Activated CD4-positive, alpha-beta memory T cell treated with anti-CD3 and anti-CD28 coated beads for 36 hours (primary cell): ENCODE measurements at regions of chr20 and their contacts with region 1.

Region 1: DNA sequence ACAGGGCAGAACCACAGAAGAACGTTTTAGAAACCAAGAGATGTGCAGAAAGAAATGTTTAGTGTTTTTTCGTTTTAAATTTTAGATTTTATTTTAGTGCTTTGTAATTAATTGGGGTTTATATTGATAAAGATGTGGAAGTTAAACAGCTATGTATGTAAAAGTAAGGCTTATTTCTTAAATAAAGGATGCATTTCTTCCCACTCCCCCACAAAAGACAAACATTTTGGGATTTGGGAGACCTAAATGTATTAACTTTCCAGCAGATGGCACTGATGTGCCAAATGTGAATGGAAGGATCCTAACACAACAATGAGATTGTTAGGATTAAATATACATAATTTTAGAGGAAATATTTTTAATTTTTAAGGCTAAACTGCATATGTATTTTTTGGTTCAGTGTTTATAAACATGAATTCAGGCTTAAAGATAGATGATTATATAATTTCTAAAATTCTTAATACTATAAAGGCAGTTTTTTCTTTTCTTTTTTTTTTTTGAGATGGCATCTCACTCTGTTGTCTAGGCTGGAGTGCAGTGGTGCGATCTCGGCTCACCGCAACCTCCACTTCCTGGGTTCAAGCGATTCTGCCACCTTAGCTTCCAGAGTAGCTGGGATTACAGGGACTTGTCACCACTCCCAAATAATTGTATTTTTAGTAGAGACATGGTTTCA is 12.0 kb downstream of the PFDN4 start:
- DNase-seq: no peak
- H3K4me3 Mint-ChIP-seq: no peak overlapping the region
- H3K27ac Mint-ChIP-seq: no peak overlapping the region
- H3K4me1 Mint-ChIP-seq: peaks cover 24% of the 10 kb centered on the region
- H3K27me3 Mint-ChIP-seq: no peaks in the 10 kb centered on the region

Region 2: DNA sequence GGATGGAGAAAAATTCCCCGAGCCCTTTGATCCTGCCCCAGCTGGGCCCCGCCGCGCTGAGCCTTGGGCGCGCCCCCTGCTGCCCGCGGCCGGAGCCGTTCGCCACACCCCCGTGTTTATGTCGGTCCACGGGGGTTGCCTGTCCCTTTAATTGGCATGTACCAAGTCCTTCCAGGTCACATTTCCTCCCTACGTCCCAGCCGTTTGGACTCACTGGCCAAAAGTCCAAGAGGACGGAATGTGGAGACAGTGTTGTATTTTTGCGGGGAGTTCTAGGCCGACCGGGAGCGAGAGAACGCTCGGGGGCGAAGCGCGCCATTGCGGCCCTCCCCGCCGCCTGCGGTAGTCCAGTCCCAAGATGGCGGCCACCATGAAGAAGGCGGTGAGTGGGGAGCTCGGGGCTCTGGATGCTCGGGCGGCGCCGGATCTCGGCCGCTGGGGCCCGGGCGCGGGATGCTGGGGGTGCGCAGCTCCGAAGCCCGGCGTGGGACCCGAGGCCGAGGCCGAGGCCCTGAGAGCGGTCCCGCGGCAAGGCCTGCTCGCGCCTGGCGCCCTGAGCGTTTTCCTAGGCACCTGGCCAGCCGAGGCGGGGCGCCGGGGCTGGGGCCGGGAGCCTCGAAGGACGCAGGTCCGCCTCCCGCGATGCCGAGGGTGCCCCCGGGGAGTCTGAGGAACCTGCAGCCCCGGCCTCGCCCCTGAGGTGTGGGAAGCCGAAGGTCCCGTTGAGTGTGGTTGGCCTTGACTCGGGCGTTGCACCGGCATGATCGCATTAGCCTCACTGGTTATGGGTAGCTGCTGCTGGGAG is 11.9 kb before region 1 on chr20 and contains the start of gene PFDN4:
- CTCF ChIA-PET with region 1: interaction called, 18 read pairs
- POLR2A ChIA-PET with region 1: interaction called, 3 read pairs
- intact Hi-C with region 1: no loop called
- DNase-seq: peak; percentile 88
- H3K4me3 Mint-ChIP-seq: peak within 1 kb of the TSS; percentile 95
- H3K27ac Mint-ChIP-seq: peak within 1 kb of the TSS; percentile 99
- H3K4me1 Mint-ChIP-seq: peaks cover 50% of the 10 kb centered on the region
- H3K27me3 Mint-ChIP-seq: peaks cover 2% of the 10 kb centered on the region
- total RNA-seq, gene PFDN4: 38.4 to 40.3 TPM

Region 3: GRCh38 chr20:54284934-54285704 is 65.2 kb after region 1 on chr20:
- CTCF ChIA-PET with region 1: no interaction called
- POLR2A ChIA-PET with region 1: no interaction called
- intact Hi-C with region 1: loop called (anchors 1 kb)
- DNase-seq: peak; percentile 56
- H3K4me3 Mint-ChIP-seq: peak overlapping the region; percentile 58
- H3K27ac Mint-ChIP-seq: peak overlapping the region; percentile 92
- H3K4me1 Mint-ChIP-seq: peaks cover 17% of the 10 kb centered on the region
- H3K27me3 Mint-ChIP-seq: peaks cover 9% of the 10 kb centered on the region

Region 4: GRCh38 chr20:54533081-54533480 is 313.2 kb after region 1 on chr20:
- CTCF ChIA-PET with region 1: no interaction called
- POLR2A ChIA-PET with region 1: no interaction called
- intact Hi-C with region 1: no loop called
- DNase-seq: no peak
- H3K4me3 Mint-ChIP-seq: no peak overlapping the region
- H3K27ac Mint-ChIP-seq: no peak overlapping the region
- H3K4me1 Mint-ChIP-seq: no peaks in the 10 kb centered on the region
- H3K27me3 Mint-ChIP-seq: peaks cover 5% of the 10 kb centered on the region

Region 5: DNA sequence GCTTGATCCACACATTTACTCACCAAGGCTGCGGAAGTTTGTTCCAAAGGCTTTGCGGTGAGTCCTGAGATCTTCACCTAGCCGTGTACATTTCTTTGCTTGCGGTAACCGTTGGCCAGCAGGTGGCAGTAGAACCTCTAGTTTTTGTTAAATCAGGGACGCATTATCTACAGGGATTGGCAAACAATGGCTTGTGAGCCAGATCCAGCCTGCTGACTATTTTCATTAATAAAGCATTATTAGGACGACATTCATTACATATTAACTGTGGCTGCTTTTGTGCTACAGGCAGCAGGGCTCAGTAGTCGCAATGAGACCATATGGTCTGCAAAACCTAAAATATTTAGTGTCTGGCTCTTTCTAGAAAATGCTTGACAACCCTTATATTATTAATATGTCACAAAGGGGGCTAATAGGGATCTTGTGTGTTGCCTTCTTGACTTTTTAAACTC is 429.6 kb after region 1 on chr20:
- CTCF ChIA-PET with region 1: interaction called, 11 read pairs
- POLR2A ChIA-PET with region 1: no interaction called
- intact Hi-C with region 1: loop called (anchors 2 kb)
- DNase-seq: peak; percentile 75
- H3K4me3 Mint-ChIP-seq: no peak overlapping the region
- H3K27ac Mint-ChIP-seq: no peak overlapping the region
- H3K4me1 Mint-ChIP-seq: no peaks in the 10 kb centered on the region
- H3K27me3 Mint-ChIP-seq: peaks cover 13% of the 10 kb centered on the region